Posterior vena cava (tissue), 2 donors: ENCODE measurements at regions of chr3 and their contacts with region 1.

Region 1: GRCh38 chr3:194292331-194292730 is 58.8 kb downstream of the CPN2 start:
- DNase-seq: peak; percentile 44

Region 2: DNA sequence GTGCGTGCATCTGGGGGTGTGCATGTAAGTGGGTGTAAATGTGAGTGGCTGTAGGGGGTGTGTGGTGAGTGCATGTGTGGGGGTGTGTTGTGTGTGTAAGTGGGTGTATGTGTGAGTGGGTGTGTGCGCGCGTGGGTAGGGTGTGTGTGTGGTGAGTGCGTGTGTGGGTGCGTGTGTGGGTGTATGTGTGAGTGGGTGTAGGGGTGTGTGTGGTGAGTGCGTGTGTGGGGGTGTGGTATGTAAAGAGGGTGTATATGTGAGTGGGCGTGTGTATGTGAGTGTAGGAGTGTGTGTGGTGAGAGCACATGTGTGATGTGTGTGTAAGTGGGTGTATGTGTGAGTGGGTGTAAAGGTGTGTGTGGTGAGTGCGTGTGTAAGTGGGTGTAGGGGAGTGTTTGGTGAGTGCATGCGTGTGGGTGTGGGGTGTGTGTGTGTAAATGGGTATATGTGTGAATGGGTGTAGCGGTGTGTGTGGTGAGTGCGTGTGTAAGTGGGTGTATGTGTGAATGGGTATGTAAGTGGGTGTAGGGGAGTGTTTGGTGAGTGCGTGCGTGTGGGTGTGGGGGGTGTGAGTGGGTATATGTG is 59.7 kb after region 1 on chr3:
- intact Hi-C with region 1: loop called in 1 of 2 experiments (anchors 2 kb)
- DNase-seq: no peak